Activated B cell treated with CpG ODN at 0.5 μM for 24 hours (primary cell): ENCODE measurements at regions of chr15 and their contacts with region 1.

Region 1: DNA sequence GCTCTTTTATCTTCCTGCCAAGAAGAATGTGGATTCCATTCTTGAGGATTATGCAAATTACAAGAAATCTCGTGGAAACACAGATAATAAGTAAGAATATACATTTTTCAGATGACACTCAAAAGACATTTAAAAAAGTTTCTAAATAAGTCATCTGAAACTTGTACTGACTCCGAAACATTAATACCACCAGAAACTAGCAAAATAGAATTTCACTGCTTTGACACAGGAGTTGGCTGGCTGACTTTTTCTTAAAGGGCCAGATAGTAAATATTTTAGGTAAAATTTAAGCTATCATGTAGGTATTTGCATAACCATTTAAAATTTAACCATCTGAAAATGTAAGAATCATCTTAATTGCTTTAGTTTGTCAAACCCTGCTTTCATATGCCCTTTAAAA is 20.8 kb downstream of the MORF4L1 start:
- DNase-seq: no peak
- ATAC-seq: no peak
- H3K4me3 Mint-ChIP-seq: no peak overlapping the region
- H3K27ac Mint-ChIP-seq: no peak overlapping the region
- H3K4me1 Mint-ChIP-seq: no peaks in the 10 kb centered on the region
- H3K27me3 Mint-ChIP-seq: no peaks in the 10 kb centered on the region
- CTCF ChIP-seq: no peak

Region 2: GRCh38 chr15:78726870-78727551 is 166.5 kb before region 1 on chr15:
- CTCF ChIA-PET with region 1: no interaction called
- POLR2A ChIA-PET with region 1: no interaction called
- intact Hi-C with region 1: no loop called
- DNase-seq: no peak
- ATAC-seq: no peak
- H3K4me3 Mint-ChIP-seq: no peak overlapping the region
- H3K27ac Mint-ChIP-seq: no peak overlapping the region
- H3K4me1 Mint-ChIP-seq: no peaks in the 10 kb centered on the region
- H3K27me3 Mint-ChIP-seq: peaks cover 6% of the 10 kb centered on the region
- CTCF ChIP-seq: no peak

Region 3: GRCh38 chr15:78878356-78878755 is 15.2 kb before region 1 on chr15:
- CTCF ChIA-PET with region 1: no interaction called
- POLR2A ChIA-PET with region 1: interaction called, 3 read pairs
- intact Hi-C with region 1: loop called (anchors 2 kb)
- DNase-seq: no peak
- ATAC-seq: no peak
- H3K4me3 Mint-ChIP-seq: peak overlapping the region; percentile 42
- H3K27ac Mint-ChIP-seq: peak overlapping the region; percentile 6
- H3K4me1 Mint-ChIP-seq: peaks cover 67% of the 10 kb centered on the region
- H3K27me3 Mint-ChIP-seq: no peaks in the 10 kb centered on the region
- CTCF ChIP-seq: no peak

Region 4: GRCh38 chr15:78909791-78910228 is 16.3 kb after region 1 on chr15:
- CTCF ChIA-PET with region 1: interaction called, 14 read pairs
- POLR2A ChIA-PET with region 1: interaction called, 4 read pairs
- intact Hi-C with region 1: no loop called
- DNase-seq: no peak
- ATAC-seq: peak; percentile 75
- H3K4me3 Mint-ChIP-seq: no peak overlapping the region
- H3K27ac Mint-ChIP-seq: peak overlapping the region; percentile 38
- H3K4me1 Mint-ChIP-seq: peaks cover 21% of the 10 kb centered on the region
- H3K27me3 Mint-ChIP-seq: no peaks in the 10 kb centered on the region
- CTCF ChIP-seq: no peak

Region 5: DNA sequence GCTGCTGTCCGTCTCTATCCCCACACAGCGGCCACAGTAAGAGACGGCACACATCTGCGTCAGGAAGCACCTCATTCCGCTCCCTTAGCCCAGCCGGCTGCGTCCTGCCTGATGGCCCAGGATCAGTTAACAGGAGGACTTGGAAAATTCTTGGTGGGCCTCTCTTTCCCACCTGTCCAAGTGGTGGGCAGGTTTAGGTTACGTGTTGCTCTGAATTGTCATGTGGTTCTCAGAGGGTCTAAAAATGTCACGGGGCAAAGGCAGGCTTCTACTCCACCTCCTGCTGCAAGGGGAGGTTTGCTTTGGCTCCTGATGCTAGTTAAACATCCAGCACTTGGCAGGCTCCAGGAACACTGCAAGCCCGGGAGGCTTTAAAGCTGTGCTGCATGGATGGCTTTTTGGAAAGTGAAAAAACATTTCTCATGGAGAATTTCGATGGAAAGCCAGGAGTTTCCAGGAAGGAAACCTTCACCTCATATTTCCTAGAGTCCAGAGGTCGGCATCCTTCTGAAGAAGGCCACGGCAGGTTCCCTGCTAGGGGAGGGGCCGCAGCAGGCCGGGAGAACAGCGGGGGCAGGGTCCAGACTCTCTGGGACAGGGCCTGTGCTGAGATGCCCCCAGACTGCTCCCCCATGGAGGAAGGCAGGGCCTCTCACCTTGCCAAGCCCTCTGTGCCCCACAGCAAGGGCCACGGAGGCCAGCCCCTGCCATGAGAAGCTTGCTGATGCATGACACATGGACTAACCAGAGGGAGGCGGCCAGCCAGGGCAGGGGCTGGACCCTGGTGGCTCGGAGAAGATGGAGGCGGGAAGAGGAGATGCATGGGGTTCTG is 40.5 kb after region 1 on chr15:
- CTCF ChIA-PET with region 1: no interaction called
- POLR2A ChIA-PET with region 1: no interaction called
- intact Hi-C with region 1: no loop called
- DNase-seq: no peak
- ATAC-seq: no peak
- H3K4me3 Mint-ChIP-seq: no peak overlapping the region
- H3K27ac Mint-ChIP-seq: peak overlapping the region; percentile 63
- H3K4me1 Mint-ChIP-seq: peaks cover 36% of the 10 kb centered on the region
- H3K27me3 Mint-ChIP-seq: no peaks in the 10 kb centered on the region
- CTCF ChIP-seq: no peak